Activated B cell treated with CpG ODN at 0.5 μM for 24 hours (primary cell): ENCODE measurements at regions of chr16 and their contacts with region 1.

Region 1: GRCh38 chr16:31142109-31143010 is 6.8 kb upstream of the PRSS8 start:
- DNase-seq: peak; percentile 97
- ATAC-seq: peak; percentile 96
- H3K4me3 Mint-ChIP-seq: peak overlapping the region; percentile 65
- H3K27ac Mint-ChIP-seq: peak overlapping the region; percentile 80
- H3K4me1 Mint-ChIP-seq: peaks cover 12% of the 10 kb centered on the region
- H3K27me3 Mint-ChIP-seq: peaks cover 5% of the 10 kb centered on the region
- CTCF ChIP-seq: no peak

Region 2: DNA sequence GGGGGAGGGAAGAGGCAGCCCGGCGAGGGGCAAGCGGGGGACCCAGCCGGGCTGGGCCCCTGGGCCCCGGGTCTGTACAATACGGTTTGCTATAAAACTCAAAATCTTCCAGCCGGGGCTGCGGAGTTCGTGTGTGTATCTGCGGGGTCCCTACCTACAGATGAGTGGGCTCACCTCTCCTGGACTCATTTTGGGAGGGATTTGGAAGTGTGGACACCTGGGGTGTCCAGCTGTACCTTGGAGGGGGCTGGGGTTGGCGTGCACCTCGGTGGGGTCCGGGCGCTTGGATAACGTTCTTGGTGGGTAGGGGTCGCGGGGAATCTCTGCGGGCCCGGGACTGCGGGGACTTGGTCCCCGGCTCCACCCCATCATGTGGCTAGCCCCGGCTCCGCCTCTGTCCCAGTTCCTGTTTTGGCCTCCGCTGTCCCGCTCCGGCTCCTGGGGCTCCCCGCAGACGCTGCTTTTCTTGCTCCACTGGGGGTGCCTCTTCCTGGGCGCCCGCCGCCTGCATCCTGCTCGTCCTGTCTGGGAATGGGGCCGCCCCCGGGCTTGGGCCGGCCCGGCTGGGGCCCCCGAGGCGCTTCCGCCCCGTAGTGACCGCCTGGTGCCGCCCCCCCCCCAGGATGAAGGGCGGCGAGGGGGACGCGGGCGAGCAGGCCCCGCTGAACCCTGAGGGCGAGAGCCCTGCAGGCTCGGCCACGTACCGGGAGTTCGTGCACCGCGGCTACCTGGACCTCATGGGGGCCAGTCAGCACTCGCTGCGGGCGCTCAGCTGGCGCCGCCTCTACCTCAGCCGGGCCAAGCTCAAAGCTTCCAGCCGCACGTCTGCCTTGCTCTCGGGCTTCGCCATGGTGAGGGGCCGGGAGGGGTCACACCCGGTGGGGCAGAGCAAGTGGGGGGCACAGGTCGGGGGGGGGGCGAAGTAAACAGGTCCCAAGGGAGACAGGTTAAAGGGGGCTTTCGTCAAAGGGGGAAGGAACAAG is 193.4 kb before region 1 on chr16 and contains the start of gene ORAI3:
- CTCF ChIA-PET with region 1: interaction called, 6 read pairs
- POLR2A ChIA-PET with region 1: interaction called, 16 read pairs
- intact Hi-C with region 1: loop called (anchors 2 kb)
- DNase-seq: peak; percentile 73
- ATAC-seq: peak; percentile 82
- H3K4me3 Mint-ChIP-seq: peak within 1 kb of the TSS; percentile 92
- H3K27ac Mint-ChIP-seq: peak within 1 kb of the TSS; percentile 86
- H3K4me1 Mint-ChIP-seq: peaks cover 27% of the 10 kb centered on the region
- H3K27me3 Mint-ChIP-seq: no peaks in the 10 kb centered on the region
- CTCF ChIP-seq: no peak
- total RNA-seq, gene ORAI3: 25.1 and 30.6 TPM in 2 replicates

Region 3: GRCh38 chr16:30997000-30997886 is 145.1 kb before region 1 on chr16:
- CTCF ChIA-PET with region 1: no interaction called
- POLR2A ChIA-PET with region 1: interaction called, 3 read pairs
- intact Hi-C with region 1: loop called (anchors 1 kb)
- DNase-seq: peak; percentile 68
- ATAC-seq: peak; percentile 99
- H3K4me3 Mint-ChIP-seq: peak overlapping the region; percentile 87
- H3K27ac Mint-ChIP-seq: peak overlapping the region; percentile 76
- H3K4me1 Mint-ChIP-seq: peaks cover 12% of the 10 kb centered on the region
- H3K27me3 Mint-ChIP-seq: no peaks in the 10 kb centered on the region
- CTCF ChIP-seq: no peak

Region 4: DNA sequence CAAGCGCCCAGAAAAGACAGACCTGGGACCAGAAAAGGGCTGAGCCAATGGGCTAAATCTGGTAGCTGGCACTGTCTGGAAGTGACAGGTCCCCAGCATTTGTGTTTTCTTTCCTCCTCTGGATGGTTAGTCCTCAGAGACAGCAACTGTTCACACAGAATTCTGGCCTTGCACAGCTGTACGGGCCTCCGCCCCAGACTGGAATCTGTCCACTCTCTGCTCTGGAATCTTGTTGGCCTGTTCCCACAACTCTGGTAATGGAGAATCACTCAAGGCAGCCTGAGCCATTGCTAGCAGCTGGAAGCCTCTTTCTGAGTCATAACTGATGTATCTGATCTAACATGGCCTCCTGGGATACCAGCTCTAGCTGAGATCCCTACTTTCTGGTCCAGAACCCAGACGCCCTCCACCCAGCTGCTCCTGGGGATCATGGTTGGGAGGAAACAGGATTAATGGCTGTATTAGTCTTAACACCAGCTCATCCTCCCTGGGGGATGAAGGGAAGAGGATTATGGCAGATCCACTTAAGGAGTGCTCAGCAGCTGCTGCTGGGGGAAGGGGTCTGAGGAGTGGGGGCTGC is 77.4 kb before region 1 on chr16:
- CTCF ChIA-PET with region 1: no interaction called
- POLR2A ChIA-PET with region 1: no interaction called
- intact Hi-C with region 1: no loop called
- DNase-seq: no peak
- ATAC-seq: no peak
- H3K4me3 Mint-ChIP-seq: no peak overlapping the region
- H3K27ac Mint-ChIP-seq: no peak overlapping the region
- H3K4me1 Mint-ChIP-seq: peaks cover 7% of the 10 kb centered on the region
- H3K27me3 Mint-ChIP-seq: no peaks in the 10 kb centered on the region
- CTCF ChIP-seq: no peak

Region 5: GRCh38 chr16:31094424-31095120 is 47.8 kb before region 1 on chr16 and contains the start of gene VKORC1:
- CTCF ChIA-PET with region 1: interaction called, 4 read pairs
- POLR2A ChIA-PET with region 1: interaction called, 10 read pairs
- intact Hi-C with region 1: loop called (anchors 1 kb)
- DNase-seq: peak; percentile 77
- ATAC-seq: peak; percentile 88
- H3K4me3 Mint-ChIP-seq: peak within 1 kb of the TSS; percentile 95
- H3K27ac Mint-ChIP-seq: peak within 1 kb of the TSS; percentile 93
- H3K4me1 Mint-ChIP-seq: peaks cover 25% of the 10 kb centered on the region
- H3K27me3 Mint-ChIP-seq: no peaks in the 10 kb centered on the region
- CTCF ChIP-seq: no peak
- total RNA-seq, gene VKORC1: 38.7 and 41.9 TPM in 2 replicates

Region 6: GRCh38 chr16:31128711-31129567 is 13.4 kb before region 1 on chr16:
- CTCF ChIA-PET with region 1: no interaction called
- POLR2A ChIA-PET with region 1: interaction called, 10 read pairs
- intact Hi-C with region 1: no loop called
- DNase-seq: no peak
- ATAC-seq: no peak
- H3K4me3 Mint-ChIP-seq: no peak overlapping the region
- H3K27ac Mint-ChIP-seq: no peak overlapping the region
- H3K4me1 Mint-ChIP-seq: no peaks in the 10 kb centered on the region
- H3K27me3 Mint-ChIP-seq: no peaks in the 10 kb centered on the region
- CTCF ChIP-seq: no peak

Region 7: GRCh38 chr16:31202414-31203375 is 60.3 kb after region 1 on chr16 and contains the start of gene PYCARD:
- CTCF ChIA-PET with region 1: no interaction called
- POLR2A ChIA-PET with region 1: interaction called, 12 read pairs
- intact Hi-C with region 1: no loop called
- DNase-seq: peak; percentile 61
- ATAC-seq: peak; percentile 32
- H3K4me3 Mint-ChIP-seq: peak within 1 kb of the TSS; percentile 91
- H3K27ac Mint-ChIP-seq: peak within 1 kb of the TSS; percentile 86
- H3K4me1 Mint-ChIP-seq: peaks cover 56% of the 10 kb centered on the region
- H3K27me3 Mint-ChIP-seq: no peaks in the 10 kb centered on the region
- CTCF ChIP-seq: no peak
- total RNA-seq, gene PYCARD: 21.7 and 27.8 TPM in 2 replicates

Region 8: GRCh38 chr16:31458844-31459721 is 316.7 kb after region 1 on chr16 and contains the start of gene ARMC5:
- CTCF ChIA-PET with region 1: interaction called, 5 read pairs
- POLR2A ChIA-PET with region 1: interaction called, 11 read pairs
- intact Hi-C with region 1: loop called (anchors 1 kb)
- DNase-seq: peak; percentile 93
- ATAC-seq: peak; percentile 75
- H3K4me3 Mint-ChIP-seq: peak within 1 kb of the TSS; percentile 91
- H3K27ac Mint-ChIP-seq: peak within 1 kb of the TSS; percentile 98
- H3K4me1 Mint-ChIP-seq: peaks cover 50% of the 10 kb centered on the region
- H3K27me3 Mint-ChIP-seq: no peaks in the 10 kb centered on the region
- CTCF ChIP-seq: no peak
- total RNA-seq, gene ARMC5: 10.9 TPM in 2 replicates